PC-9 (cell line): ENCODE measurements at regions of chr7 and their contacts with region 1.

Region 1: GRCh38 chr7:94266238-94266644 is 128.5 kb upstream of the COL1A2 start:
- DNase-seq: peak in 1 of 2 experiments; percentile 40
- H3K4me3 ChIP-seq: no peak overlapping the region
- H3K27ac ChIP-seq: no peak overlapping the region
- H3K4me1 ChIP-seq: no peaks in the 10 kb centered on the region
- H3K27me3 ChIP-seq: no peaks in the 10 kb centered on the region
- CTCF ChIP-seq: no peak

Region 2: DNA sequence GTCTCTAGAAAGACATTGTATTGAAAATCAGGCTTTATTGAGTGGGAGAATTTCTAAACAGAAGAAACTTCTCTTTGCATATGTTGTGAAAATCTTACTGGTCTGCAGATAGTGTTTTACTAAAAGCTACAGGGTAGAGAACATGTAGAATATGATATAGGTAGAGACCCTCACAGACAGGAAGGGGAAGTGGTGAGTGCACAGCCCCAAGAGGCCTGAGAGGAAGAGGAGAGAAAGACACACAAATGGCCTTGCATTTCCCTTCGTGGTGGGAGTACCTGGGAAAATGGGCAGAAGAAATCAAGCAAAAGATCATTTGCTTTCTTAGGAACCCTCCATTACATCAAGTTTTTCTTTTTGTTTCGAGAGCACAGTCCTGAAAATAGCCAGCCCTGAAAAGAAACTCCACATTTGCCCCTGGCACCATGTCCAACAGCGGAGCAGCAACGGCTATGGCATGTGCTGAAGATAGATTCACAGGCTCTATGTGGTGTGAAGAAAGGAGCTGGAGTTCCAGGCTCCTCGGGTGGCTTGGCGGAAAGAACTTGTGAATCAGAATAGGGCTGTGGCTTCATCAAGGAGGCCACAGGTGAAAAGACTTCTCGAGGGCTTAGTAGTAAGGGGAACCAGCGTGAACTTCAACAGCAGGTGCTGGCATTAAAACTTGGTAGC is 835.2 kb before region 1 on chr7:
- CTCF ChIA-PET with region 1: no interaction called
- POLR2A ChIA-PET with region 1: no interaction called
- intact Hi-C with region 1: no loop called
- DNase-seq: no peak
- H3K4me3 ChIP-seq: no peak overlapping the region
- H3K27ac ChIP-seq: no peak overlapping the region
- H3K4me1 ChIP-seq: no peaks in the 10 kb centered on the region
- H3K27me3 ChIP-seq: no peaks in the 10 kb centered on the region
- CTCF ChIP-seq: no peak

Region 3: GRCh38 chr7:94205529-94205928 is 60.7 kb before region 1 on chr7:
- CTCF ChIA-PET with region 1: no interaction called
- POLR2A ChIA-PET with region 1: interaction called, 17 read pairs
- intact Hi-C with region 1: no loop called
- DNase-seq: no peak
- H3K4me3 ChIP-seq: no peak overlapping the region
- H3K27ac ChIP-seq: no peak overlapping the region
- H3K4me1 ChIP-seq: no peaks in the 10 kb centered on the region
- H3K27me3 ChIP-seq: no peaks in the 10 kb centered on the region
- CTCF ChIP-seq: no peak